Aorta (tissue), 5 donors: ENCODE measurements at regions of chr6 and their contacts with region 1.

Region 1: GRCh38 chr6:15621203-15622044 is 41.4 kb downstream of the DTNBP1 start:
- DNase-seq: peak in 1 of 2 donors; percentile 74
- ATAC-seq: no peak
- H3K4me3 ChIP-seq: no peak overlapping the region
- H3K27ac ChIP-seq: no peak overlapping the region
- H3K4me1 ChIP-seq: no peaks in the 10 kb centered on the region
- H3K27me3 ChIP-seq: no peaks in the 10 kb centered on the region

Region 2: DNA sequence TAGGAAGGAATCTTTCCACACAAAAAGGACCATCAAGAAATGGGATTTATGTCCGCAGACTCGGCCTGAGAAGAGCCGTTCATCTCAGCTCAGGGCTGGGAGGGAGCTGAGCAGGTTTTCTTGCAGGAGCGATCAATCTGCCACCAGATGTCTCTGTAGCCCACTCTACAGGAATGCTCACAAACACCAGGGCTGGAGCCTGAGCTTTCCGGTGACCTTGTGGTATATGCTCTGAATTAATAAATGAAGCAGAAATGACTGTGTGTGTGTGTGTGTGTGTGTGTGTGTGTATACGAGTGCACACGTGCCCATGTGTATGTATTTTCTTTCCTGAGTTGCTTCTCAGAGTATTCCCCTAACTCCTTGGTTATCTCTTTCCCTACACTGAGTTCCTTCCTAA is 1491.8 kb before region 1 on chr6:
- intact Hi-C with region 1: loop called in 1 of 2 experiments (anchors 10 kb)
- DNase-seq: no peak
- ATAC-seq: peak; percentile 77
- H3K4me3 ChIP-seq: no peak overlapping the region
- H3K27ac ChIP-seq: no peak overlapping the region
- H3K4me1 ChIP-seq: no peaks in the 10 kb centered on the region
- H3K27me3 ChIP-seq: no peaks in the 10 kb centered on the region

Region 3: DNA sequence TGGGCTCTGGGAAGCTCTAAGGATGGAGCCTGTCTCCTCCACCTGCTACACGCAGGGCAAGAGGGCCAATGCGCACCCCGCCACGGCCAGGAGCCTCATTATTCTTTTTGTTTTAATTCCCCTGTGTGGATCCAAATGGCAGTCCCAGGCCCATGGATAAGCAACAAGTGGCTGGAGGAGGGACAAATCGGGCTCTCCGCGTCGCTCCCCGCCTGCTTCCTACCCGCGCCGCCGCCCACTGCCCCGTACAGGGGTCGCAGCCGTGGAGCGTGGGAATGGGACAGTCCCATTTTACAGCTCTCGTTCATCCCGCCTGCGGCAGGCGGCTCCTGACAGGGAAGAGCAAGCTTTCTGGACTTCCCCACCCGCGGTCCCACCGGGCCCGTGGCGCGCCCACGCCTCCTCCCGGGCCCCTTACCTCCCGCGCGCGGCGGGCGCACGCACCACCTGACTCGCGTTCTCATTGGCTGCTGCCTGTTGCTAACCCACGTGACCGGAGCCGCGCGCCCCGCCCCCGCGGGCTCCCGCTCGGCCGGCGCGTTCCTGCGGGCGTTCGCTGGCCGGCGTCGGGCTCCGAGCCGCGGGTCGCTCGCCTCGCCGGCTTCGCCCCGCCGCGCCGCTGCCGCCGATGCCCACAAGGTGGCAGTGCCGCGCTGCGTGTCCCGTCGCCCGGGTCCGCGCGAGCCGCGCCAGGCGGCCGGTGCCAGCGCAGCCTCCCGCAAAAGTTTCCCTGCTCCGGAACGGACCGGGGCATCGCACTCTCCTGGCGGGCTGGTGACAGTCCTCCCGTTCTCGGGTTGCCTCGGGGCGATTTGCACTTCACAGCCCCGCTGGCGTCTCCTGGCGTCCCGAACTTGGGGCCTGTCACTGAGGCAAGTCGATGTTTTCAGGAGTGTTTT is 1410.5 kb before region 1 on chr6:
- intact Hi-C with region 1: loop called (anchors 10 kb)
- DNase-seq: peak; percentile 96 to 97
- ATAC-seq: peak; percentile 96
- H3K4me3 ChIP-seq: peak overlapping the region; percentile 25 to 40
- H3K27ac ChIP-seq: no peak overlapping the region
- H3K4me1 ChIP-seq: no peaks in the 10 kb centered on the region
- H3K27me3 ChIP-seq: no peaks in the 10 kb centered on the region

Region 4: GRCh38 chr6:15239616-15240364 is 381.6 kb before region 1 on chr6:
- intact Hi-C with region 1: loop called in 1 of 2 experiments (anchors 10 kb)
- DNase-seq: no peak
- ATAC-seq: no peak
- H3K4me3 ChIP-seq: no peak overlapping the region
- H3K27ac ChIP-seq: peak overlapping the region in 1 of 2 donors; percentile 17
- H3K4me1 ChIP-seq: peaks cover 0 to 7% of the 10 kb centered on the region in 2 donors
- H3K27me3 ChIP-seq: no peaks in the 10 kb centered on the region

Region 5: GRCh38 chr6:15504581-15505350 is 116.7 kb before region 1 on chr6:
- intact Hi-C with region 1: loop called (anchors 10 kb)
- DNase-seq: peak; percentile 71 to 80
- ATAC-seq: peak; percentile 74
- H3K4me3 ChIP-seq: no peak overlapping the region
- H3K27ac ChIP-seq: no peak overlapping the region
- H3K4me1 ChIP-seq: no peaks in the 10 kb centered on the region
- H3K27me3 ChIP-seq: no peaks in the 10 kb centered on the region